Stomach (tissue), 19 donors: ENCODE measurements at regions of chr4 and their contacts with region 1.

Region 1: DNA sequence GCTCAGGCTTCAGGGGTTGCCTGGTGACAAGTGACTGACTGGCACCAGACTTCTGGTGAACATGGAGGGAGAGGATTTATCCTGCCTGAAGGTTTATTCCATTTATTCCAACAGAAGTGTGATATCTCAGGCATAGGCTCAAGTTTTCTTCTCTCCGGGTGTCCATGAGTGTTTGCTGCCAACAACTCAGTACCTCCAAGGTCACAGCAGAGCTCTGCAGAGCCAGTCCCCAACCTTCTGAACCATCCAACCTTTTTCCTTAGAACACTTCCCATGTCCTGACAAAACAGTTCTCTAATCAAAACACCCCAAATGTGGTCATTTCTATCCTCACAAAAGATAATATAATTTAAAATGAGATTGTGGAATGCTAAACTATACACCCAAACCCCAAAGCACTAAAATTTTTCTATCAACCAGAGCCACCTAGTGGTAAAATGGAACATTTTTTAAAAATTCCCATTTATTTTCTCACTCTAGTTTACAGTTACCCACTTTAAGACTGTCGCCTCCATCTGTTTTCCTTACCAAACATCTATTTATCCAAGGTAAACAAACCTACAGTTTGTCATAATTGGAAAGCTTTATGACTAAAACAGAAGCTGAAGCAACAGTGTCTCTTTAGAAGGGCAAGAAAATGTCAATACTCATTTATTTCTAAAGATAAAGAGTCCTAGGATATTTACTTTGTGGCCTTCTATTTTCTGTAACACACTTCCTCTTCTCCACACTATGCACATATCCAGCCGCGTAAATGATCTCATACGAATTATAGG is 39.6 kb downstream of the TMEM154 start:
- DNase-seq: peak in 1 of 2 donors; percentile 43
- H3K4me3 ChIP-seq: no peak overlapping the region
- H3K27ac ChIP-seq: no peak overlapping the region
- H3K4me1 ChIP-seq: peaks cover 0 to 34% (median 9%) of the 10 kb centered on the region in 4 donors
- H3K27me3 ChIP-seq: no peaks in the 10 kb centered on the region
- CTCF ChIP-seq: peak in 4 of 7 experiments; percentile 58 to 67 (median 64)
- EP300 ChIP-seq: no peak
- POLR2A ChIP-seq: no peak

Region 2: GRCh38 chr4:152499344-152499743 is 140.9 kb before region 1 on chr4:
- intact Hi-C with region 1: loop called (anchors 2 kb)
- DNase-seq: no peak
- H3K4me3 ChIP-seq: no peak overlapping the region
- H3K27ac ChIP-seq: no peak overlapping the region
- H3K4me1 ChIP-seq: peaks cover 0 to 33% (median 13%) of the 10 kb centered on the region in 4 donors
- H3K27me3 ChIP-seq: no peaks in the 10 kb centered on the region
- CTCF ChIP-seq: no peak
- EP300 ChIP-seq: no peak
- POLR2A ChIP-seq: no peak